ENCODE measurements at regions of chr11 and their contacts with region 1.

Region 1: DNA sequence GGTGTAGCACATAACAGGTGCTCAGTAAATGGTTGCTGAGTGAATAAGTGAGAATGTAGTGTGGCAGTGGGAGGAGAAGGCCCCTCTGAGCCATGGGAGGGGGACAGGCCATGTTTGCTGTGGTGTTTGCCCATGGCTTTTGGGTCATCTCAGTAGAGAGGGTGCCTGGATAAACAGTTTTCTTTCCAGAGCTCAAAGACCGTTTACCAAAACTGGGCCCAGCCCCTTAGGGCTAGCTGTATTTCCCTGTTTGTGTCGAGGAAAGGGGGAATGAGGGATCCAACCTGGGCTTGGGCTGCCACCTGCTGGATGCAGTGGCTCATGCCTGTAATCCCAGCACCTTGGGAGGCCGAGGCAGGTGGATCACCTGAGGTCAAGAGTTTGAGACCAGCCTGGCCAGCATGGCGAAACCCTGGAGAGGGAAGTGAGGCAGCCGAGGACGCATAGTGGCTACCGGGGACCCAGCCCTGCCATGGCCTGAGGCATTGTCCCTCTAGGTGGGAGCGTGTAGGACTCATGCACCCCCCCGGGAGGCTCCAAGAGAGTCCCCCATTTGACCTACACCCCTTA is 8.7 kb upstream of the LTO1 start:
- DNase-seq: peak in 1 of 2 experiments; percentile 64
- ATAC-seq: peak in 1 of 2 experiments; percentile 75; a peak in 3 of 6 replicates
- H3K4me3 ChIP-seq: no peak overlapping the region
- H3K27ac ChIP-seq: no peak overlapping the region
- H3K4me1 ChIP-seq: peaks cover 12% of the 10 kb centered on the region; the same call in 2 of the 3 replicates
- CTCF ChIP-seq: peak; percentile 66
- EP300 ChIP-seq: no peak
- POLR2A ChIP-seq: no peak
- RAD21 ChIP-seq: peak; percentile 77 to 89

Region 2: GRCh38 chr11:69699213-69699612 is 15.4 kb after region 1 on chr11:
- CTCF ChIA-PET with region 1: interaction called, 19 read pairs
- POLR2A ChIA-PET with region 1: no interaction called
- DNase-seq: no peak
- ATAC-seq: no peak
- H3K4me3 ChIP-seq: no peak overlapping the region
- H3K27ac ChIP-seq: no peak overlapping the region
- H3K4me1 ChIP-seq: peaks cover 14% of the 10 kb centered on the region
- CTCF ChIP-seq: no peak
- EP300 ChIP-seq: no peak
- POLR2A ChIP-seq: no peak
- RAD21 ChIP-seq: no peak

Region 3: DNA sequence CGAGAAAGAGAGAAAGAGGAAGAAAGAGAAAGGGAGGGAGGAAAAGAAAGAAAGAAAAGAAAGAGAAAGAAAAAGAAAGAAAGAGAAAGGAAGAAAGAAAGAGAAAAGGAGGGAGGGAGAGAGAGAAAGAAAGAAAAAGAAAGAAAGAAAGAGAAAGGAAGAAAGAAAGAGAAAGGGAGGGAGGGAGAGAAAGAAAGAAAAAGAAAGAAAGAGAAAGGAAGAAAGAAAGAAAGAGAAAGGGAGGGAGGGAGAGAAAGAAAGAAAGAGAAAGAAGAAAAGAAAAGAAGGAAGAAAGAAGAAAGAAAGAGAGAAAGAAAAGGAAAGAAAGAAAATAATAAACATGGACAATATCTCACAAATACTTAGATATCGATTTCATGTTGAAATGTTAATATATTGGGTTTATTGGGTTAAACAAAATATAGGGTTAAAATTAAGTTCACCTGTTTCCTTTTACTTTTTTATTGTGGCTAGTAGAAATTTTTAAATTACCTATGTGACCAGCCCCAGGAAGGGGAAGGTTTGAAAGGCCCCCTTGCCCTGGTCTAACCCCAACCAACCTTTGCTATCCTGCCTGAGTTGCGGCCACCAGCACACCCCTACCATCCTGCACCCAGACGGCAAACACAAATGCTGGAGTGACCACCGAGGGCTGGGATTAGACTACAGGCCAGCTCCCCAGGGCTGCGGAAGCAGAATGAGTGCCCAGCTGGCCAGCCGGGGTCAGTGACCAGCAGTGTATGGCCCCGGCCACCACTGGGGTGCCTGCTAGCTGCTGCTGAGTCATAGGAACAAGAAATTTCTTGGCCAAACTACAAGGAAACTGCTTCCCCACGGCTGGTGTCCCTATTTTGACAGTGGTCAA is 216.3 kb after region 1 on chr11:
- CTCF ChIA-PET with region 1: interaction called, 10 read pairs
- POLR2A ChIA-PET with region 1: no interaction called
- DNase-seq: peak in 1 of 2 experiments; percentile 56
- ATAC-seq: peak; percentile 65 to 81; a peak in 5 of 6 replicates
- H3K4me3 ChIP-seq: no peak overlapping the region
- H3K27ac ChIP-seq: peak overlapping the region; percentile 33 to 75; a peak in 5 of 6 replicates
- H3K4me1 ChIP-seq: peaks cover 16% of the 10 kb centered on the region
- CTCF ChIP-seq: no peak
- EP300 ChIP-seq: no peak
- POLR2A ChIP-seq: no peak
- RAD21 ChIP-seq: no peak